Astrocyte of the cerebellum (primary cell): ENCODE measurements at regions of chr15 and their contacts with region 1.

Region 1: DNA sequence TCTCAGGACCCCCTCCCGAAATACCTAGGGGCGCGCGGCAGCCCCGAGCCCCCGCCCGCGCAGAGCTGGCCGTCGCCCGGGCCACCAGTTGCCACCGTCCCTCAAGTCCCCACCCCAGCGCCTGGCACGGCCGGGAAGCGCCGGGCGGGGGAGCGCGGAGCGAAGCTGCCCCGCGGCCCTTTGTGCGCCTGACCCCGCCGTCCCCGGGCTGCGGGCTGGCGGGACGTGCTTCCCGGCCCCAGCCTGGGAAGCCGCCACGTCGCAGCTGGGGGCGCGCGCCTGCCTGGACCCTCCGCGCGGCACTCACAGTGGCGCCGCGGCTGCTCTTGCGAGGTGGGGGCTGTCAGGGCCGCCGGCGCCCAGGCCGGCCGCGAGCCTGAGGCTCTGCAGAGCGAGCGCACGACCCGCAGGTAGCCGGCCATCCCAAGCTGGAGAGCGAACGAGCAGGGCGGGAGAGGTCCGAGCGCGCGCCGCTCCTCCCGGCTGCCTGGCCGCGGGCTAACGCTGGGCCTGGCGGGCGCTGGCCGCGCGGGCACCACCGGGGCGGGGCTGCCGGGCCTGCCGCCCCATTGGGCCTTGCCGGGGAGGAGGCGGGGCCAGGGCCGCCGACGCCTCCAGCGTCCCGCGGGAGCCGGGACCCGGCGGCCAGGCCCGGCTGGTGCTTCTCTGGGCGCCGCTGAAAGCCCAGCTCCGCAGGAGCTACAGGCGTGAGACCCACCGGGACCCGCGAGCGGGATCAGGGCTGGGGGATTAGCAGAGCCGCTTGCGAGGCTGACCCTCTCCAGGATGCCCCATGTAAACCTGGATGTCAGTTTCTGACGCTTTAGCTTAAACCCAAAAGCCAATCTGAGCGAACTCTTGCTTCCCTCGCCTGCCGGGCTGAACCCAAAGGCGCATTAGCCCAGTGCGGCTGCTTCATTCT is at the start of gene IDH2:
- DNase-seq: peak; percentile 37
- H3K4me3 ChIP-seq: peak within 1 kb of the TSS; percentile 67
- CTCF ChIP-seq: no peak

Region 2: GRCh38 chr15:90143166-90143655 is 41.0 kb after region 1 on chr15:
- in situ Hi-C with region 1: loop called (anchors 5 kb)
- DNase-seq: no peak
- H3K4me3 ChIP-seq: no peak overlapping the region
- CTCF ChIP-seq: peak; percentile 63